GM12878 (cell line): ENCODE measurements at regions of chr12 and their contacts with region 1.

Region 1: GRCh38 chr12:24991209-24992049 is 42.5 kb upstream of the BCAT1 start:
- DNase-seq: peak; percentile 65
- ATAC-seq: peak; percentile 72
- H3K4me3 ChIP-seq: no peak overlapping the region
- H3K27ac ChIP-seq: no peak overlapping the region
- H3K4me1 ChIP-seq: peaks cover 29% of the 10 kb centered on the region
- H3K27me3 ChIP-seq: no peaks in the 10 kb centered on the region
- CTCF ChIP-seq: peak; percentile 35 to 64 (median 45); a peak in 4 of 6 replicates
- EP300 ChIP-seq: no peak
- POLR2A ChIP-seq: no peak
- RAD21 ChIP-seq: peak; percentile 92

Region 2: DNA sequence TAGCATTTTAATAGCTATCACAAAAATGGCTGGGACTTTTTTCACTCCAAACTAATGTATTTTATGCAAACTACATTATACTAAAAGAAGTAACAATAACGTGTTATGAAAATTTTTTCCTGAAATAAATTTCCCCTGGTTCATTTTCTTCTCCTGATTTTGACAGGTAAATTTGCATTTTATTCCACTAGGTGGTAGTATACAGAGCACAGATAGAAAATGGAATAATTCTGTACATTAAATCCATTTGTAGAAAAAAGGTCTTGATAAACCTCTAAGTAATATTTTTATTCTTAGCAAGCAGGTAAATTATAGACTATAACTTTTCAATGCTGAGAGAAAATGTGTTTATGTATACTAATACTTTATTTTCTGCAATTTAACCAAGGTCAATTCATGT is 139.0 kb before region 1 on chr12:
- CTCF ChIA-PET with region 1: interaction called, 34 read pairs
- POLR2A ChIA-PET with region 1: no interaction called
- RAD21 ChIA-PET with region 1: interaction called, 13 read pairs
- SMC1A ChIA-PET with region 1: interaction called, 41 read pairs
- in situ Hi-C with region 1: no loop called
- intact Hi-C with region 1: no loop called
- DNase-seq: no peak
- ATAC-seq: no peak; the same call in 2 of the 3 replicates
- H3K4me3 ChIP-seq: no peak overlapping the region
- H3K27ac ChIP-seq: no peak overlapping the region
- H3K4me1 ChIP-seq: no peaks in the 10 kb centered on the region
- H3K27me3 ChIP-seq: no peaks in the 10 kb centered on the region
- CTCF ChIP-seq: peak in 2 of 3 experiments; percentile 14 to 28; a peak in 2 of 6 replicates
- EP300 ChIP-seq: no peak
- POLR2A ChIP-seq: no peak
- RAD21 ChIP-seq: peak; percentile 46

Region 3: GRCh38 chr12:24937553-24938244 is 53.7 kb before region 1 on chr12:
- CTCF ChIA-PET with region 1: no interaction called
- POLR2A ChIA-PET with region 1: no interaction called
- RAD21 ChIA-PET with region 1: no interaction called
- SMC1A ChIA-PET with region 1: no interaction called
- in situ Hi-C with region 1: no loop called
- intact Hi-C with region 1: no loop called
- DNase-seq: no peak
- ATAC-seq: peak; percentile 19
- H3K4me3 ChIP-seq: no peak overlapping the region
- H3K27ac ChIP-seq: no peak overlapping the region
- H3K4me1 ChIP-seq: peaks cover 9% of the 10 kb centered on the region
- H3K27me3 ChIP-seq: no peaks in the 10 kb centered on the region
- CTCF ChIP-seq: no peak
- EP300 ChIP-seq: no peak
- POLR2A ChIP-seq: no peak
- RAD21 ChIP-seq: no peak

Region 4: GRCh38 chr12:24960222-24960855 is 31.1 kb before region 1 on chr12:
- CTCF ChIA-PET with region 1: interaction called, 22 read pairs
- POLR2A ChIA-PET with region 1: interaction called, 3 read pairs
- RAD21 ChIA-PET with region 1: interaction called, 16 read pairs
- SMC1A ChIA-PET with region 1: interaction called, 28 read pairs
- in situ Hi-C with region 1: no loop called
- intact Hi-C with region 1: no loop called
- DNase-seq: peak; percentile 56
- ATAC-seq: peak; percentile 94
- H3K4me3 ChIP-seq: no peak overlapping the region
- H3K27ac ChIP-seq: no peak overlapping the region
- H3K4me1 ChIP-seq: peaks cover 7% of the 10 kb centered on the region
- H3K27me3 ChIP-seq: no peaks in the 10 kb centered on the region
- CTCF ChIP-seq: peak; percentile 75 to 85 (median 76)
- EP300 ChIP-seq: no peak
- POLR2A ChIP-seq: no peak
- RAD21 ChIP-seq: peak; percentile 77

Region 5: DNA sequence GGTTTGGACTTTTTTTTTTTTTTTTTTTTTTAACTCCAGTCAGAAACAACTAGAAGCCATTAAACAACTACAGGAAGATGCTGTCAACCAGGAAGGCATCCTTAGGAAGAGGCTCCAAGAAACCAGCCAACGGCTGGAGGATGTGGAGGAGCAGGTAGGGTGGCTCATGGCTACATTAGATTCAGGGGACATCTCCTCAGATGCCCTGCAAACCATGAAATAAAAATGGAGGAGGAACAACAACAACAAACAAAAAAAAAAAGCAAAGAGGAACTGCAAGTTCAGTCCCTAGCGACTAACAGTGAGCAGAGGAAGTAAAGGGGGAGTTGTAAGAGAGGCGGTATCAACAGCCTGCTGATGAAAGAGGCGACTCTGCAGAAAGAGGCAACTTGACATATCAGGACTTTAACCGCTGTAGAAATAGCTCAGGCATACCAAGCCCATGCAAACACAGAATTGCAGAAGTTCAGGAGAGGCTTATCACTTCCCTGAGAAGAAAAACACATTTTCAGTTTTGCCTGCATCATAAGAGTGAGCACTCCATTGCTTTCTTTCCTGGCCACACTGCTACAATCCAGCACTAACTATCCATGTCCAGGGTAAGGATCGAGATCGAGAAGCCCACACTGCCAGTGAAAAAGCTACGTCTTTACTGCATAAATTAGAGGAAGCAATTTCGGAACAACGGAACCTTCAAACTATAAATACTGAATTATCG is 60.9 kb after region 1 on chr12:
- CTCF ChIA-PET with region 1: interaction called, 141 read pairs
- POLR2A ChIA-PET with region 1: interaction called, 297 read pairs
- RAD21 ChIA-PET with region 1: interaction called, 462 read pairs
- SMC1A ChIA-PET with region 1: interaction called, 526 read pairs
- in situ Hi-C with region 1: no loop called
- intact Hi-C with region 1: no loop called
- DNase-seq: peak; percentile 93
- ATAC-seq: peak; percentile 79
- H3K4me3 ChIP-seq: peak overlapping the region; percentile 83
- H3K27ac ChIP-seq: peak overlapping the region; percentile 92
- H3K4me1 ChIP-seq: peaks cover 14% of the 10 kb centered on the region; the same call in 1 of the 2 replicates
- H3K27me3 ChIP-seq: no peaks in the 10 kb centered on the region
- CTCF ChIP-seq: no peak
- EP300 ChIP-seq: peak in 1 of 2 experiments; percentile 72; a peak in 2 of 4 replicates
- POLR2A ChIP-seq: peak; percentile 72
- RAD21 ChIP-seq: no peak

Region 6: GRCh38 chr12:25089738-25090137 is 98.3 kb after region 1 on chr12:
- CTCF ChIA-PET with region 1: interaction called, 9 read pairs
- POLR2A ChIA-PET with region 1: no interaction called
- RAD21 ChIA-PET with region 1: interaction called, 3 read pairs
- SMC1A ChIA-PET with region 1: interaction called, 14 read pairs
- in situ Hi-C with region 1: no loop called
- intact Hi-C with region 1: no loop called
- DNase-seq: no peak
- ATAC-seq: no peak
- H3K4me3 ChIP-seq: no peak overlapping the region
- H3K27ac ChIP-seq: peak overlapping the region; percentile 20; the same call in 1 of the 2 replicates
- H3K4me1 ChIP-seq: peaks cover 9% of the 10 kb centered on the region
- H3K27me3 ChIP-seq: no peaks in the 10 kb centered on the region
- CTCF ChIP-seq: no peak
- EP300 ChIP-seq: no peak
- POLR2A ChIP-seq: no peak
- RAD21 ChIP-seq: no peak

Region 7: GRCh38 chr12:25130741-25131188 is 139.3 kb after region 1 on chr12:
- CTCF ChIA-PET with region 1: interaction called, 161 read pairs
- POLR2A ChIA-PET with region 1: no interaction called
- RAD21 ChIA-PET with region 1: interaction called, 103 read pairs
- SMC1A ChIA-PET with region 1: interaction called, 125 read pairs
- in situ Hi-C with region 1: no loop called
- intact Hi-C with region 1: loop called (anchors 1 kb)
- DNase-seq: no peak
- ATAC-seq: peak; percentile 78
- H3K4me3 ChIP-seq: no peak overlapping the region
- H3K27ac ChIP-seq: no peak overlapping the region
- H3K4me1 ChIP-seq: peaks cover 2% of the 10 kb centered on the region; the same call in 1 of the 2 replicates
- H3K27me3 ChIP-seq: no peaks in the 10 kb centered on the region
- CTCF ChIP-seq: peak in 2 of 3 experiments; percentile 32 to 43; a peak in 3 of 6 replicates
- EP300 ChIP-seq: no peak
- POLR2A ChIP-seq: no peak
- RAD21 ChIP-seq: peak; percentile 65

Region 8: GRCh38 chr12:25352083-25352918 is 360.9 kb after region 1 on chr12:
- CTCF ChIA-PET with region 1: no interaction called
- POLR2A ChIA-PET with region 1: no interaction called
- RAD21 ChIA-PET with region 1: no interaction called
- SMC1A ChIA-PET with region 1: no interaction called
- in situ Hi-C with region 1: no loop called
- intact Hi-C with region 1: no loop called
- DNase-seq: peak; percentile 24
- ATAC-seq: peak; percentile 67
- H3K4me3 ChIP-seq: no peak overlapping the region
- H3K27ac ChIP-seq: no peak overlapping the region
- H3K4me1 ChIP-seq: no peaks in the 10 kb centered on the region
- H3K27me3 ChIP-seq: no peaks in the 10 kb centered on the region
- CTCF ChIP-seq: no peak
- EP300 ChIP-seq: no peak
- POLR2A ChIP-seq: no peak
- RAD21 ChIP-seq: no peak